ENCODE measurements at regions of chr2 and their contacts with region 1.

Region 1: DNA sequence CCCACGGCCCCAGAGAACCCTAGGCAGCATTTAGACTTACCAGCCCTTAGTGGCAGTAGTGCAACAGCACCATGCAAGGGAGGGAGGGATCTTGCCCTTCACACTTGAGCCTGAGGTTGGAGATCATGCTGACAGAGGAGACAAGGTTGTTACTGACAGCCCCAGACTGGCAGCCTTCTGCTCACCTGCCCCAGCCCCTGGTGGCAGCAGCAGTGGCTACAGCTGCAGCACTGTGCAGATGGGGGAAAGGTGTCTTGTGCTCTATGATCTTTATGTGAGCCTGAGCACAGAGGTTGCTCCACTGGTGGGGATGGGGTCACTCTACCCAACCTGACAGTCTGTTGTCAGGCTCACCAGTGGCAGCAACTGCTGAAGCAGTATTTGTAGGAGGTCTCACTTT is 501.2 kb upstream of the LRRTM4 start:
- DNase-seq: no peak
- H3K4me3 ChIP-seq: no peak overlapping the region
- H3K27ac ChIP-seq: no peak overlapping the region
- H3K4me1 ChIP-seq: no peaks in the 10 kb centered on the region
- H3K27me3 ChIP-seq: no peaks in the 10 kb centered on the region
- CTCF ChIP-seq: no peak
- POLR2A ChIP-seq: no peak

Region 2: DNA sequence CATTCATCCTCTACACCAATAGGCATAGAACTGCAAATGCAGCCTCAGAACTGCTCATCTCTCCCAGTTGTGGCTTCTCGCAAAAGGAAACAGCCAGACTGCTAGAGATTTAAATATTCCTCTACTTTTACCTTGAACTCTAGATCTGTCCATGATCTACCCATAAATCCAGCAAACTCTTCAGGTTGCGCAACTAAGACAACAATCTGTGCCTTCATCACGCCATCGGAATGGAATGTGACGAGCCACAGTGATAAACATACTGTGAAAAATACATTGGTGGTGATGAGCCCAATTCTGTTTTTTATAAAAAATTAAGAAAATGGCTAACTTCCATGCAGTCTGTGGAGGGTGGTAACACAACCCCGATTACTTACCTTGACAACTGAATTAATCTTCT is 1127.9 kb before region 1 on chr2:
- intact Hi-C with region 1: no loop called
- DNase-seq: no peak
- H3K4me3 ChIP-seq: no peak overlapping the region
- H3K27ac ChIP-seq: no peak overlapping the region
- H3K4me1 ChIP-seq: no peaks in the 10 kb centered on the region
- H3K27me3 ChIP-seq: no peaks in the 10 kb centered on the region
- CTCF ChIP-seq: no peak
- POLR2A ChIP-seq: no peak

Region 3: DNA sequence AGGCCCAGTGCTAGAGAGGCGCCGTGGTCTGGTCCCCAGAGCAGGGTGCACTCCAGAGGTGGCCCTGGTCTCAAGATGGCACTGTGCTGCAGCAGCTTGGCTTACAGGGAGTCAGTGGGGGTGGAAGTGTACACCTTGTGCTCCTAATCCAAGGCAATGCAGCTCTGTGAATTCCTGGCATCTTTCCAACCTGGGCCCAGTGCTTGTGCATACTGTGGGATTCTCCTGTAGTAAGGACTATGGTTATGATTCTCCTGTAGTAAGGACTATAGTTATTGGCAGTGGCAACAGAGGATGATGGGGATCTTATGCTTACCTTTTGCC is 385.4 kb after region 1 on chr2:
- intact Hi-C with region 1: loop called (anchors 5 kb)
- DNase-seq: no peak
- H3K4me3 ChIP-seq: no peak overlapping the region
- H3K27ac ChIP-seq: no peak overlapping the region
- H3K4me1 ChIP-seq: no peaks in the 10 kb centered on the region
- H3K27me3 ChIP-seq: no peaks in the 10 kb centered on the region
- CTCF ChIP-seq: no peak
- POLR2A ChIP-seq: no peak

Measured in breast epithelium (tissue), 4 donors.